ENCODE measurements at regions of chr1 and their contacts with region 1.

Region 1: DNA sequence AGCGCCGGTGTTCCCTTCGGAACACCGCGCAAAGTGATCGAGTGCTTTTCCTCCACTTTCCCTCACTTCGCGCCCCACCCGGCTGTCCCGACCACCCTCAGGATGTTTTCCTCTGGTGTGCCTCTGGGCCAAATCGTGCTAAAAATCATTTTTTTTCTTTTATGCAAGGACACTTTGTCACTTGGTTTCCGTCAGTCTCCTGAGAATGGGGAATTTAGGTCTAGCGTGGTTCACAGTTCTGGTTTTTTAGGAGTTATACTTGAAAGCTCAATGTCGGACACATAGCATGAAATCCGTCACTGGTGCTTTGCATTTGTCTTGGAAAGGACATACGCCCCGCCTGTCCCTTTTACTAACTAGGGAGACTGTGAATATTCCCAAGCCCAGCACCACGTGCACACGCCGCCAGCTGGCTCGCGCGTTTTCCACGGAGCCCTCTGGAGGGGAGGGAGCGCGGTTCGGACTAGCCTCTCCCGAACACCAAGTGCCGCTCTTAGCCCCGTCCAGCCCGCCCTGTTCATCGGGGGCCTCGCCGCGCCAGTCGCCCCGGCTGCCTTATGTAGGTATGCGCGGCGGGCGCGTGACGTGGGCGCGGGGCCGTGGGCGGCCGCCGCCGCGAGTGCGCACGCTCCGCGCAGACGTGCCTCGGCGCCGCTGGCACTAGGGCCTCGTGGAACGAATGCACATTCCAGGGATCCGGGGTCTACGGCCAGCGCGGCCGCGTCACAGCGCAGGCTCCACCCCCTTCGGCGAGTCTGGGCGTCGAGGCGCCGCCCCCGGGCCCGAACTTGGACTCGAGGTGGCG is 572 bp upstream of the IRF2BP2 start:
- DNase-seq: peak; percentile 98
- H3K4me3 Mint-ChIP-seq: peak overlapping the region; percentile 95
- H3K27ac Mint-ChIP-seq: peak overlapping the region; percentile 100
- H3K4me1 Mint-ChIP-seq: peaks cover 47% of the 10 kb centered on the region
- H3K27me3 Mint-ChIP-seq: peaks cover 2% of the 10 kb centered on the region

Region 2: GRCh38 chr1:234676103-234676594 is 65.6 kb after region 1 on chr1:
- intact Hi-C with region 1: loop called (anchors 2 kb)
- DNase-seq: peak; percentile 87
- H3K4me3 Mint-ChIP-seq: peak overlapping the region; percentile 77
- H3K27ac Mint-ChIP-seq: peak overlapping the region; percentile 40
- H3K4me1 Mint-ChIP-seq: peaks cover 11% of the 10 kb centered on the region
- H3K27me3 Mint-ChIP-seq: peaks cover 1% of the 10 kb centered on the region

Region 3: GRCh38 chr1:234772345-234773147 is 162.0 kb after region 1 on chr1:
- intact Hi-C with region 1: loop called (anchors 1 kb)
- DNase-seq: peak; percentile 95
- H3K4me3 Mint-ChIP-seq: peak overlapping the region; percentile 65
- H3K27ac Mint-ChIP-seq: peak overlapping the region; percentile 95
- H3K4me1 Mint-ChIP-seq: peaks cover 54% of the 10 kb centered on the region
- H3K27me3 Mint-ChIP-seq: no peaks in the 10 kb centered on the region

Region 4: GRCh38 chr1:234925440-234926263 is 315.1 kb after region 1 on chr1:
- intact Hi-C with region 1: loop called (anchors 1 kb)
- DNase-seq: peak; percentile 78
- H3K4me3 Mint-ChIP-seq: peak overlapping the region; percentile 83
- H3K27ac Mint-ChIP-seq: peak overlapping the region; percentile 95
- H3K4me1 Mint-ChIP-seq: peaks cover 59% of the 10 kb centered on the region
- H3K27me3 Mint-ChIP-seq: no peaks in the 10 kb centered on the region

Region 5: GRCh38 chr1:235075188-235075926 is 464.8 kb after region 1 on chr1:
- intact Hi-C with region 1: loop called (anchors 1 kb)
- DNase-seq: peak; percentile 82
- H3K4me3 Mint-ChIP-seq: peak overlapping the region; percentile 69
- H3K27ac Mint-ChIP-seq: peak overlapping the region; percentile 100
- H3K4me1 Mint-ChIP-seq: peaks cover 31% of the 10 kb centered on the region
- H3K27me3 Mint-ChIP-seq: no peaks in the 10 kb centered on the region

Measured in activated CD4-positive, alpha-beta T cell treated with anti-CD3 and anti-CD28 coated beads, Interleukin-2, amount 10 ng/mL, durations not matched to agents 24 days and 14 days (primary cell).